Activated CD4-positive, alpha-beta T cell treated with anti-CD3 and anti-CD28 coated beads for 36 hours (primary cell): ENCODE measurements at regions of chr9 and their contacts with region 1.

Region 1: DNA sequence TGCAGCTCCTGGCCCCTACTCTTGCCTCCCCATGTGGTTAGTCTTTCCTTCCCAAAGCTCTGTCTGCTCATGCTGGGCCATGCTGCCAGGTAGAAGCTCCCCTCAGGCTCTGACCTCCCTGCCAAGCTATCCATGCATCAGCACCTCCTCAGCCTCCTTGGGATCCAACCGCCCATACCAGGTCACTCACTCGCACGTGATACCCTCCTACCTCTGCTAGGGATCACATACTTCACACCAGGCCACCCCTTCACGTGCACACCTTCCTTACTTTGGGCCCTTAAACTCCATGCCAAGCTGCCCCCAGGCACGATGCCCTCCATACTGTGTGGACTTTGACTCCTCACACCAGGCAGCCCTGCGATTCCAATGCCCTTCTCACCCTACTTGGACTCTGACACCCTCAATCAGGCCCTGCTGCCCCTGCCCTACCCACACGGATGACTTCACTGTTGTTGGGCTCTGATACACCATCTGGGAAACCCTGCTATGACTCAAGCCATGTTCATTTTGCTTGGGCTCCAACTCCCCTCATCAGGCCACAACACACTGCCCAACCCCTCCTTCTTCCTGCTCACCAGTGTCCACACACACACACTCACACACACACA is 34.1 kb downstream of the ZNF483 start:
- DNase-seq: no peak
- ATAC-seq: no peak
- H3K4me3 Mint-ChIP-seq: no peak overlapping the region
- H3K27ac Mint-ChIP-seq: no peak overlapping the region
- H3K4me1 Mint-ChIP-seq: no peaks in the 10 kb centered on the region
- H3K27me3 Mint-ChIP-seq: no peaks in the 10 kb centered on the region

Region 2: DNA sequence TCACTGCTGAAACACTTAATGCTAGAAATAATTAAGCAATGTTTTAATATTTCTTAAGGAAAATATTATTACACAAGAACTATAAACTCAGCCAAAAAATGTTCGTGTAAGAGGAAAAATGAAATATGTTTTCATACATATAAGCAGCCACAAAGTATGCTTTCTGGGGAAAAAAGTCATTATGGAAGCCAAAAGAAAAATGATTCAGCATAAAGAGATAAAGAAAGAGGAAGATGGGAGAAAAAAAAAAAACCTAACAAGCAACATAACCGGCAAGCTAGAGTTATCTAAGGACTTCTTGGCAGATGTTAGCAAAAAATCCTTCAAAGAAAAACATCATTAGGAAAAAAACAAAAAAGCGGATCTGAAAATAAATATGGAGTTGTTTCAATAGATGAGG is 711.4 kb before region 1 on chr9:
- CTCF ChIA-PET with region 1: no interaction called
- POLR2A ChIA-PET with region 1: no interaction called
- intact Hi-C with region 1: no loop called
- DNase-seq: no peak
- ATAC-seq: no peak
- H3K4me3 Mint-ChIP-seq: no peak overlapping the region
- H3K27ac Mint-ChIP-seq: no peak overlapping the region
- H3K4me1 Mint-ChIP-seq: no peaks in the 10 kb centered on the region
- H3K27me3 Mint-ChIP-seq: peaks cover 3% of the 10 kb centered on the region

Region 3: DNA sequence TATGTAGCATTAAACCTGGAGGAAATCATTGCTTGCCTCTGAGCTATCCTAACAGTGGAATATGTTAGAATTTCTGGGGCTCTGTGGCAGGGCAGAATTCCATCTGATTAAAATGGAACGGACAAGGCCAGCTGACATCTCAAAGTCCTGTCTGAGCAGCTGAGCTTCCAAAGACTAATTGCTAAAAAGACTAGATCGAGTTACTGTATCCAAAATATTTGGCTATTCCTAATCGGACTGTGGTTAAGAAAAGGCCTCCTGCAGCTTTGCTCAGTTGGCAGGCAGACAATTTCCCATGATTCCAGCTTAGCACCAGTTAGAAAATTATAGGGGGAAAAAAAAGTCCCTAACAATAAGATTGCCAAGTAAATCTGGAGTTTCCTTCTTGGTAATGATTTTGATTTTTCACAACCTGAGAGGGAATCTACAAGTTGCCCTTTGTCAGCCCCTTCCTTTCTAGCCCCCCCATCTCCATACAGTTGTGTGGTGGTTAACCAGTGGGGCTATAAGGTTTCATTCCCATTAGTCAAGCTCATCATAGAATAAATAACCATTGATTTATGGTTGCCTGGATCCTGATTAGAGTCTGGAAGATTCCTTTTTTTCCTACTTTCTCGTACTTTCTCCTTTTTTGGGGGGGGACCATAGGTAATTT is 14.0 kb after region 1 on chr9:
- CTCF ChIA-PET with region 1: no interaction called
- POLR2A ChIA-PET with region 1: no interaction called
- intact Hi-C with region 1: loop called in 1 of 2 experiments (anchors 2 kb)
- DNase-seq: no peak
- ATAC-seq: no peak
- H3K4me3 Mint-ChIP-seq: no peak overlapping the region
- H3K27ac Mint-ChIP-seq: no peak overlapping the region
- H3K4me1 Mint-ChIP-seq: no peaks in the 10 kb centered on the region
- H3K27me3 Mint-ChIP-seq: no peaks in the 10 kb centered on the region